MCF 10A (cell line): ENCODE measurements at regions of chr15 and their contacts with region 1.

Region 1: DNA sequence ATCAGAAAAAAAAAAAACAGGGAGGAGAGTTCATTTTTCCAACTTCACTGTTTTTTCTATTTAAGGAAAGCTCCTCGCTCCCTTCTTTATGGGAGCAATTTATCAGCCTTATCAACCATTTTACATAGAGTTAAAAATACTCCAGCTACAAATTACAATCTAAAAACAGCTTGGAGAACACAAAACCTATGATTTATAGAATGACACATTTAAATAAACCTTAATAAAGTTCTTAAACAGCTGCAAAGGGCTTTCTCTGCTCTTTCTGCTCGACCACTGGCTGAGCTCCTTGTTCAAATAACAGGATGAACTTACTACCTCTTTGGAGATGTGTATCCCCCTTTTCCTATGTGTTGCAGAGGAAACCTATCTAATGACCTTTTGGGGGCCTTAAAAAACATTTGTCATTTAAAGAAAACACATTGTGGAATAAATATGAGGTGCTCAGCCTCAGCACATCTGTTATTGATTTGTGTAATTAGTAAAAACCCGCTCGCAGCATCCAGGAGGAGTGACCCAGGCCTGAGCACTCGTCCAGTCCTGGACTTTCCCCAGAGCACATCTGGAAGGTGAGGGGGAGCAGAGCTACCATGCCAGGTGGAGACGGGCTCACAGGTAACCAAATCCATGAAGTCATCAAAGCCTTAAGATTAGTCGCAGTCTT is 231.2 kb downstream of the ATP8B4 start:
- DNase-seq: no peak
- H3K4me3 Mint-ChIP-seq: no peak overlapping the region
- H3K27ac Mint-ChIP-seq: no peak overlapping the region
- H3K4me1 Mint-ChIP-seq: no peaks in the 10 kb centered on the region
- H3K27me3 Mint-ChIP-seq: no peaks in the 10 kb centered on the region
- CTCF ChIP-seq: no peak

Region 2: DNA sequence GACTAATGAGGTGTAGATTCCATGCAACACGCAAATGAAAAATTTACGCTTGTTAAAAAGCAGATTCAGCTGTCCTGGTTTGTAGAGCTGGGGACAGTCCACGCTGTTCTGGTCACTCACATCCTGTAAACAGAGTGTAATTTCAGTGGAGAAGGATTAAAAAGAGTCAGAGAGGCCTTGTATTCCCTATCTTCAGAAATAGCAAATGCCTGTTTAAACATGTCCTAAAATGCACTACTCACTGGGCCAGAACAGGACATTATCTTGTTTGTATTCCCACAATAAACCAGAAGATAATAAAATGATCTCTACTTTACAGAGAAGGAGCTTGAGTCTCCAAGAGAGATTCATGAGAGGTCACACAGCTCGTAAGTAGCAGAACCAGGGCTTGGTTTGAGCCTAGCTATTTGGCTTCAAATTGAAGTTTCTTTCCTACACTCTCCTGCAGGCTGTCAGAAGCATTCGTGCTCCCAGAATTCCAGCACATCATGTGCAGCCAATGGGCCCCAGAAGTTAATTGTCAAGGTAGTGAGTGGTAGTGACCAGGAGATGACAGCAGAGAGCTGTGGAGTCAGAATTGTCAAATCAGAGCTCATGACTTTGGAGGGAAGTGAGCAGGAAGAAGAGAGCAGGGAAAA is 11.3 kb before region 1 on chr15:
- CTCF ChIA-PET with region 1: interaction called, 13 read pairs
- POLR2A ChIA-PET with region 1: no interaction called
- intact Hi-C with region 1: no loop called
- DNase-seq: no peak
- H3K4me3 Mint-ChIP-seq: no peak overlapping the region
- H3K27ac Mint-ChIP-seq: no peak overlapping the region
- H3K4me1 Mint-ChIP-seq: no peaks in the 10 kb centered on the region
- H3K27me3 Mint-ChIP-seq: no peaks in the 10 kb centered on the region
- CTCF ChIP-seq: peak; percentile 17

Region 3: GRCh38 chr15:50256188-50257041 is 368.6 kb after region 1 on chr15:
- CTCF ChIA-PET with region 1: no interaction called
- POLR2A ChIA-PET with region 1: no interaction called
- intact Hi-C with region 1: no loop called
- DNase-seq: peak; percentile 87
- H3K4me3 Mint-ChIP-seq: no peak overlapping the region
- H3K27ac Mint-ChIP-seq: peak overlapping the region; percentile 5
- H3K4me1 Mint-ChIP-seq: peaks cover 6% of the 10 kb centered on the region
- H3K27me3 Mint-ChIP-seq: peaks cover 5% of the 10 kb centered on the region
- CTCF ChIP-seq: no peak